Vagina (tissue), 2 donors: ENCODE measurements at regions of chr1 and their contacts with region 1.

Region 1: GRCh38 chr1:185473186-185473585 is 156.1 kb upstream of the IVNS1ABP start:
- DNase-seq: no peak
- H3K4me3 ChIP-seq: no peak overlapping the region
- H3K27ac ChIP-seq: no peak overlapping the region
- H3K4me1 ChIP-seq: no peaks in the 10 kb centered on the region
- H3K27me3 ChIP-seq: no peaks in the 10 kb centered on the region
- CTCF ChIP-seq: no peak
- POLR2A ChIP-seq: no peak

Region 2: GRCh38 chr1:185495007-185495406 is 21.8 kb after region 1 on chr1:
- intact Hi-C with region 1: loop called (anchors 2 kb)
- DNase-seq: no peak
- H3K4me3 ChIP-seq: no peak overlapping the region
- H3K27ac ChIP-seq: no peak overlapping the region
- H3K4me1 ChIP-seq: no peaks in the 10 kb centered on the region
- H3K27me3 ChIP-seq: no peaks in the 10 kb centered on the region
- CTCF ChIP-seq: no peak
- POLR2A ChIP-seq: no peak